Thyroid gland (tissue), 4 donors: ENCODE measurements at regions of chr15 and their contacts with region 1.

Region 1: GRCh38 chr15:63188926-63189871 is at the start of gene RAB8B:
- DNase-seq: peak; percentile 98 to 99
- H3K4me3 ChIP-seq: peak within 1 kb of the TSS; percentile 64 to 83 (median 74)
- H3K27ac ChIP-seq: peak within 1 kb of the TSS; percentile 45 to 76 (median 52)
- H3K4me1 ChIP-seq: peaks cover 7 to 24% of the 10 kb centered on the region in 2 donors
- H3K27me3 ChIP-seq: no peaks in the 10 kb centered on the region
- CTCF ChIP-seq: no peak
- POLR2A ChIP-seq: peak in 1 of 2 donors; percentile 69
- total RNA-seq, gene RAB8B: 17.6 to 36.0 (median 22.1) TPM

Region 2: DNA sequence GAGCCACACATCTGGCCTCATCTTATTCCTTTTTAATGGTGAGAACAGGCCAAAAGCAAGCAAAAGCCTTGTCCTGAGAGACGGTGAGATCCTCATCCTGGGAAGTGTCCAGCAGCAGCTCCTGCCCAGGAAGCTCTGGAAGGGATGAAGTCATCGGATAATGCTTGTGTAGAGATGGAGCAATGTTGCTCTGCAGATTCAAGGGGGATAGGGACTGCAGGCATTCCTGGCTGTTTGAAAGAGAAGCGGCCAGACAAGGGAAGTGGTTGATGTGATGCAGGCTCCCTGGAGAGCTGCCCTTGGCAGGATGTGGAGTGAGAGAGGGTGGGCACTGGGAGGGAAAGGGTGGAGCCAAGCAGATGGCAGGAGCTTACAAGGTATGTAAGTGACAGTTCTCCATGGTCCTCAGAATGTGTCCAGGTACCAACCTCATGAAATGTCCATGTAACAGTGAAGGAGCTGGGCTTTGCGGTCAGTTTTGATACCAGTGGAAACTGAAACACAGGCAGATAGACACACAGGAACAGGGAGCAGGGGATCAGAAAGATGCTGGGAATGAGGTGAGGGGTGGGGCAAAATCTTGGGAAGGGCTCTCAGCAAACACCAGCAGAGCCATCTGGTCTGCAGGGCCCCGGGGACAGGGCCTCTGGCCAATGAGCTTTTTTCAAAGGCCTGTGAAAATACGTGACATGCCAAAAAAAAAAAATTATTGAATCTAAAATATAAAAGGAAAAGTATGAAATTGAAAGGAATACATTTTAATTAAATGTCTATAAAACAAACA is 99.7 kb before region 1 on chr15:
- intact Hi-C with region 1: no loop called
- DNase-seq: peak; percentile 61 to 65
- H3K4me3 ChIP-seq: no peak overlapping the region
- H3K27ac ChIP-seq: peak overlapping the region; percentile 39 to 93 (median 61)
- H3K4me1 ChIP-seq: peaks cover 28 to 31% of the 10 kb centered on the region in 2 donors
- H3K27me3 ChIP-seq: no peaks in the 10 kb centered on the region
- CTCF ChIP-seq: no peak
- POLR2A ChIP-seq: no peak

Region 3: GRCh38 chr15:63256433-63257274 is 67.5 kb after region 1 on chr15:
- intact Hi-C with region 1: no loop called
- DNase-seq: no peak
- H3K4me3 ChIP-seq: no peak overlapping the region
- H3K27ac ChIP-seq: no peak overlapping the region
- H3K4me1 ChIP-seq: no peaks in the 10 kb centered on the region
- H3K27me3 ChIP-seq: no peaks in the 10 kb centered on the region
- CTCF ChIP-seq: no peak
- POLR2A ChIP-seq: no peak

Region 4: GRCh38 chr15:63277038-63277892 is 88.1 kb after region 1 on chr15 and contains the start of gene APH1B:
- intact Hi-C with region 1: loop called (anchors 10 kb)
- DNase-seq: peak; percentile 87 to 91
- H3K4me3 ChIP-seq: peak within 1 kb of the TSS; percentile 48 to 97 (median 74)
- H3K27ac ChIP-seq: peak within 1 kb of the TSS; percentile 90 to 94 (median 91)
- H3K4me1 ChIP-seq: peaks cover 4 to 7% of the 10 kb centered on the region in 2 donors
- H3K27me3 ChIP-seq: no peaks in the 10 kb centered on the region
- CTCF ChIP-seq: peak in 1 of 6 experiments; percentile 9
- POLR2A ChIP-seq: peak in 1 of 2 donors; percentile 82
- total RNA-seq, gene APH1B: 22.9 to 35.3 (median 27.8) TPM